ENCODE measurements at regions of chr19 and their contacts with region 1.

Region 1: GRCh38 chr19:20565321-20566018 is at the start of gene ZNF737:
- DNase-seq: peak; percentile 91
- H3K4me3 ChIP-seq: peak within 1 kb of the TSS; percentile 78
- H3K27ac ChIP-seq: peak within 1 kb of the TSS; percentile 85
- H3K27me3 ChIP-seq: no peaks in the 10 kb centered on the region
- CTCF ChIP-seq: peak; percentile 34
- polyA plus RNA-seq, gene ZNF737: 10.3 and 10.7 TPM in 2 replicates

Region 2: GRCh38 chr19:20503476-20503875 is 62.0 kb before region 1 on chr19:
- CTCF ChIA-PET with region 1: no interaction called
- POLR2A ChIA-PET with region 1: no interaction called
- DNase-seq: no peak
- H3K4me3 ChIP-seq: no peak overlapping the region
- H3K27ac ChIP-seq: no peak overlapping the region
- H3K27me3 ChIP-seq: no peaks in the 10 kb centered on the region
- CTCF ChIP-seq: no peak

Region 3: DNA sequence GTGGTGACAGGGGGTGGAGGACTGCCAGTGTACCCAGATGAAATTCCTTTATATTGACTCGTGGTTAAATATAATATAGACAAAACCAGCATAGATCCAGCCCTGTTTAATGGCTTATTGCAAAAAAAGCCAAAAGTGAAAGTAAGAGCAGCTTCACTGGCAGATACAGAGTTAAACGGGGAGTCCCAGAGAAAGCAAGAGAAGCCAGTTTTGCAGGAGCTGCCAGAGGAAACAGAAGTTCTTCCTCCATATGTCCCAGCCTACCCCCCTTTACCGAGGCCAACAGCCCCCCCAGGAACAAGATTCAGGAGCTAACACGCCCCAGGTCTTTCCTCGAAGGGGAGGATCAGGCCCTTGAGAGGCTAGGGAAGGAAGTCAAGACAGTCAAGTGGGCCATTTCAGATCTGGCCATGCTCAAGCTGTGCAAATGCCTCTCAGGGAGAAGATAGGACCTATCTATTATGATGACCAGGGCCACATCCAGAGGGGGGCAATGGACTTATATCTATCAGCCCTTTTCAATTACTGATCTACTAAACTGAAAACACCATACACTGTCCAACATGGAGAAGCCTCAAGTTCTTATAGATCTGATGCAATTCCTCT is 47.3 kb after region 1 on chr19:
- CTCF ChIA-PET with region 1: no interaction called
- POLR2A ChIA-PET with region 1: no interaction called
- DNase-seq: no peak
- H3K4me3 ChIP-seq: peak overlapping the region; percentile 48
- H3K27ac ChIP-seq: no peak overlapping the region
- H3K27me3 ChIP-seq: no peaks in the 10 kb centered on the region
- CTCF ChIP-seq: no peak

Region 4: DNA sequence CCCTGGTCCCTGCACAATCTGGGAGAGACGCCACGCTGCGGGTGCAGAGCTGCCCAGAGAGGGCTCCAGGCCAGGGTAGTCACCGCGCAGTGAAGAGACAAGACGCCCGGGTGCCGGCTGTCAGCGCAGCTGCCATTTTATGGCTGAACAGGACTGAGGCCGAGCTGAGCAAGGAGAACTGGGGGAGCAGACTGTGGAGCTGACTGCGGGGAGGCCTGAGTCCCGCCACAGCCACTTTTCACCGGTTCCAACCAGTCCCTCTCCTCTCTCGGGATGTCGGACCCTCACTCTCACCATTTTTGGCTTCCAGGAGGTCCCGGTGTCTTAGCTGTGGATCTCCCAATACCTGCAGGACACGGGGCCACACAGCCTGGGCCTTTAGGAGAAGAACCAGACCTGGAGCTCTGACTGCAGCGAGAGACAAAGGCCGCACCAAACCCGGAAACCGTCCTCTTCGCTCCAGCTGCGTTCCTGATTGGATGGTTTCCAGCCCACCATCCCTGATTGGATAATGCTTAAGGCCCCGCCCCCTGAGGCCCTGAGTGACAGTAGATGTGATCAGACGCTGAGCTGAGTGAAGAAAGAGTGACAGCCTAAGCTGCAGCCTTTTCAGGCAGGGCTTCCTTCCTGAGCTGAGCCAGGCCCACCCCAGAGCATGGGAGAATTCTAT is 95.8 kb after region 1 on chr19 and contains the start of gene ZNF626:
- CTCF ChIA-PET with region 1: no interaction called
- POLR2A ChIA-PET with region 1: interaction called, 20 read pairs
- DNase-seq: peak; percentile 92
- H3K4me3 ChIP-seq: peak within 1 kb of the TSS; percentile 86
- H3K27ac ChIP-seq: peak within 1 kb of the TSS; percentile 83
- H3K27me3 ChIP-seq: no peaks in the 10 kb centered on the region
- CTCF ChIP-seq: no peak
- polyA plus RNA-seq, gene ZNF626: 5.9 and 9.0 TPM in 2 replicates

Region 5: DNA sequence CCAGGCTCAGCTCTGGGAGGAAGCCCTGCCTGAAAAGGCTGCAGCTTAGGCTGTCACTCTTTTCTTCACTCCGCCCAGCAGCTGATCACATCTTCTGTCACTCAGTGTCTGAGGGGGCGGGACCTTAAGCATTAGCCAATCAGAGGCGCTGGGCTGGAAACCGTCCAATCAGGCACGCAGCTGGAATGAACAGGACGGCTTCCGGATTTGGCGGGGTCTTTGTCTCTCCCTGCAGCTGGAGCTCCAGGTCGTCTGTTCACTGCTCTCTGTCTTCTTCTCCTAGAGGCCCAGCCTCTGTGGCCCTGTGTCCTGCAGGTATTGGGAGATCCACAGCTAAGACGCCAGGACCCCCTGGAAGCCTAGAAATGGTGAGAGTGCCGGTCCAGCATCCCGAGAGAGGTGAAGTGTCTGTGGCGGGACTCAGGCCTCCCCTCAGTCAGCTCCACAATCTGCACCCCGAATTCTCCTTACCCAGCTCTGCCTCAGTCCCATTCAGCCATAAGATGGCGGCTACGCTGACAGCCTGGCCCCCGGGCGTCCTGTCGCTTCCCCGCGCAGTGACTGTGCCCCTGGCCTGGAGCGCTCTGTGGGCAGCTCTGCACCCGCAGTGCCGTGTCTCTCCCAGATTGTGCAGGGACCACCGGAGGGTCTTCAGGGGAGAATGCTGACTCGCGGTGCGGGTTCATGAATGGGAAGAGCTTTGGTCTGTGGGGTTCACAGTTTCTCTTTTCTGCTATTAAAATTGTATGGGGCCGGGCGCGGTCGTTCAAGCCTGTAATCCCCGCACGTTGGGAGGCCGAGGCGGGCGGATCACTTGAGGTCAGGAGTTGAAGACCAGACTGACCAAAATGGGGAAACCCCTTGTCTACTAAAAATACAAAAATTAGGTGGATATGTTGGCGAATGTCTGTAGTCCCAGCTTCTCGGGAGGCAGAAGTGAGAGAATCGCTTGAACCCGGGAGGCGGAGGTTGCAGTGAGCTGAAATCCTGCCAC is 210.9 kb after region 1 on chr19 and contains the start of gene ZNF66:
- CTCF ChIA-PET with region 1: no interaction called
- POLR2A ChIA-PET with region 1: interaction called, 11 read pairs
- DNase-seq: peak; percentile 93
- H3K4me3 ChIP-seq: peak within 1 kb of the TSS; percentile 94
- H3K27ac ChIP-seq: peak within 1 kb of the TSS; percentile 57
- H3K27me3 ChIP-seq: no peaks in the 10 kb centered on the region
- CTCF ChIP-seq: no peak
- polyA plus RNA-seq, gene ZNF66: 0.69 and 0.84 TPM in 2 replicates

Measured in AG04450 (cell line).